HAP-1 (cell line): ENCODE measurements at regions of chr2 and their contacts with region 1.

Region 1: GRCh38 chr2:43484323-43484930 is 111.4 kb downstream of the THADA start:
- DNase-seq: peak in 1 of 2 experiments; percentile 77
- H3K4me3 ChIP-seq: no peak overlapping the region
- H3K4me1 ChIP-seq: peaks cover 3% of the 10 kb centered on the region
- H3K27me3 ChIP-seq: no peaks in the 10 kb centered on the region

Region 2: DNA sequence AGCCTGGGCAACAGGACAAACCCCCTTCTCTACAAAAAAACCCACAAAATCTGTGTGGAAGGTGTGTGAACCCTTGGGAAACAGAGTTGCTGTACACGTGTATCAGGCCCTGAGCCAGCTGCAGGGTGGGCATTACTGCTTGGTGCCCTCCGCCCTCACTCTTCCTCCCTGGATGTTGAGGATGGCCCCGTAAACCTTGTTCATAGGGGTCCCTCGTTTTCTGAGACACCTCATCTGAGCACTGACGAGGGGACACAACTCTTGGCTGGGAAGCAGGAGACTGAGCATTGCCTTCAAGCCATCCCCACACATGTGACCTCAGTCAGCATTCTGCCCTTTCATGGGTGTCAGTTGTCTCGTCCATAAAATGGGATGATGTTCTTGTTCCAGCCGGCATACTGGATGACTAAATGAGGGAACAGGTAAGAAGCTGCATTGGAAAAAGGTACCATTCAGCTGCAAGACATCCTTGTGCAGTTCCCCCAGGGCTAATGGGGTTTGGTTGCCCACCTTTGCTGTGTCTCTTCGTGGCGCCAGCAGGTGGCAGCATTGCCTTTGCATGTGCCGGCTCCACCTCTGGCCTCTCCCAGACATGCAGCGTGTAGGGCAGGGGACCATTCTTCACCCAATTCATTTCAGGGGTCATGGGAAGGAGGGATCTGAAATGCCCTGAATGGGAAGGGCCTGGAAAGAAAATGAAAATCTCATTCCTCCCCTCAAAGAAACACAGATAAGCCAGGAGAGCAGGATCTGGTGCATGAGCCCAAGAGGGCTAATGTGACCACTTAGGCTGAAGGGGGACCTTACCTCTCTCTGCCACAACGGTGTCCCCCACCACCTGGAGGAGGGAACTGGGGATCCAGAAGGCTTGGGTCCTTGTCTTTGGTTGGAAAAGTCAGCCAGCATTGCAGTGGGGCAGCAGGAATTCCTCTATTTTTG is 655.7 kb before region 1 on chr2:
- in situ Hi-C with region 1: loop called (anchors 5 kb)
- DNase-seq: peak; percentile 89 to 90
- H3K4me3 ChIP-seq: no peak overlapping the region
- H3K4me1 ChIP-seq: peaks cover 25% of the 10 kb centered on the region
- H3K27me3 ChIP-seq: no peaks in the 10 kb centered on the region

Region 3: DNA sequence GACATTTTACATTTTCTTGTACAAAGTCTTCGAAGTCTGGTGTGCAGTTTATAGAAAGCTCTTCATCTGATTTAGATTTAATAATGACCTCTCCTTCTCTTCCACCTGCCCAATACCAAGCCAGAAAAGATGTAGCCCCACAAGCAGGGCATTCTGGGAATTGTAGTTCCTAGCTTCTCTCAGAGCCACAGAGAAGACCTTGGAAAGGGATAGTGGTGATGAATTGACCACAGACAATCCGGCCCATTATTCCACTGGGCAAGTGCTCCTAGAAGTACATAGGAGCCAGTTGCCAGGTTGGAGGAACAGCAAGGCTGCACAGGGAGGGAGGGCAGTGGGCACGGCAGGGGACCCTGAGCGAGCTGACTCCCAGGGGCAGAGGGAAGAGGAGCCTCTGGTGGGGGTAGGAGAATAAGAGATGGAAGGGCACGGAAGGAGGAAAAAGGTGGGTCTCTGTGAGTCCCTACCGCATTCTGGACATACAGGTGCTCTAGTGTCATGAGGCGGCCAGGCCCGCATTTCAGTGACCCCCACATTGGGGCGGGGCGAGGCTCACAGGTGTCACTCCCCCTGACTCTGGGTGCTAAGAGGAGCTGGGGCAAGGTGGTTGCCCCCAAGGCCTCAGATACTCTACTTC is 539.5 kb before region 1 on chr2:
- in situ Hi-C with region 1: loop called (anchors 5 kb)
- DNase-seq: no peak
- H3K4me3 ChIP-seq: no peak overlapping the region
- H3K4me1 ChIP-seq: no peaks in the 10 kb centered on the region
- H3K27me3 ChIP-seq: no peaks in the 10 kb centered on the region

Region 4: GRCh38 chr2:43127208-43127940 is 357.1 kb before region 1 on chr2:
- in situ Hi-C with region 1: loop called (anchors 10 kb)
- DNase-seq: peak; percentile 39 to 87
- H3K4me3 ChIP-seq: no peak overlapping the region
- H3K4me1 ChIP-seq: no peaks in the 10 kb centered on the region
- H3K27me3 ChIP-seq: no peaks in the 10 kb centered on the region

Region 5: DNA sequence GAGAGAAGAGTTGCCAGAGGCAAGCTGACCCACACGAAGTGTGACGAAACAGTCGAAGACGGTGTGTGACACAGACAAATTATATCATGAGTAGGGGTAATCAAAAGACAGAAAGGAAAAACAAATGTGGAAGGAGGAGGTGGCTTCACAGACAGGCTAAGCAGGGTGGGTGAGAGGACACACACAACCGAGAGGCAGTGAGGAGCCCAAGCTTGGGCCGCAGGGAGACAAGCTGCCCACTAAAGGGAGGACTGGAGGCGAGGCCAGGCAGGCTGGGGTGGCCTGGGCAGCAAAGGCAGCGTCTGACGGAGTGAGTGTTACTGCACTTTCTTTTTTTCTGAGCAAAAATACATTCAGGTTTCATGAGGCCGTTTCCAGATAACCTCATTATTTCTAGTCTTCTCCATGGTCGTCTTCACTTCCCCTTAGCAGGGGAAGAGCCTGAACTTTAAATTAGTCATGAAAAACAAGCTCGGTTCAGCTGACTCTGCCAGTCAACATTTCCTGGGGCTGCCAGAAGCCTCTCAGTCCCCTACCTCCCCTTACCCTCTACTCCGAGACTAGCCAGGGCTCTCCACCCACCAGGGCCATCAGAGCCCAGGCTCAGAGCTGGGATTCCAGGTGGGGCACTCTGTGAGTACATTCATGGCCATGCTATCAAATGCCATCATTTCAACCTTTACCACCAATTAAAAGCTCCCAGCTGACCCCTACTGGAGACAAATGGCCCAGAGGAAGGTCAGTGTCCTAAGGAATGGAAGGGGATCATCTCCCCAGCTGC is 244.3 kb before region 1 on chr2:
- in situ Hi-C with region 1: loop called (anchors 10 kb)
- DNase-seq: no peak
- H3K4me3 ChIP-seq: no peak overlapping the region
- H3K4me1 ChIP-seq: no peaks in the 10 kb centered on the region
- H3K27me3 ChIP-seq: no peaks in the 10 kb centered on the region

Region 6: DNA sequence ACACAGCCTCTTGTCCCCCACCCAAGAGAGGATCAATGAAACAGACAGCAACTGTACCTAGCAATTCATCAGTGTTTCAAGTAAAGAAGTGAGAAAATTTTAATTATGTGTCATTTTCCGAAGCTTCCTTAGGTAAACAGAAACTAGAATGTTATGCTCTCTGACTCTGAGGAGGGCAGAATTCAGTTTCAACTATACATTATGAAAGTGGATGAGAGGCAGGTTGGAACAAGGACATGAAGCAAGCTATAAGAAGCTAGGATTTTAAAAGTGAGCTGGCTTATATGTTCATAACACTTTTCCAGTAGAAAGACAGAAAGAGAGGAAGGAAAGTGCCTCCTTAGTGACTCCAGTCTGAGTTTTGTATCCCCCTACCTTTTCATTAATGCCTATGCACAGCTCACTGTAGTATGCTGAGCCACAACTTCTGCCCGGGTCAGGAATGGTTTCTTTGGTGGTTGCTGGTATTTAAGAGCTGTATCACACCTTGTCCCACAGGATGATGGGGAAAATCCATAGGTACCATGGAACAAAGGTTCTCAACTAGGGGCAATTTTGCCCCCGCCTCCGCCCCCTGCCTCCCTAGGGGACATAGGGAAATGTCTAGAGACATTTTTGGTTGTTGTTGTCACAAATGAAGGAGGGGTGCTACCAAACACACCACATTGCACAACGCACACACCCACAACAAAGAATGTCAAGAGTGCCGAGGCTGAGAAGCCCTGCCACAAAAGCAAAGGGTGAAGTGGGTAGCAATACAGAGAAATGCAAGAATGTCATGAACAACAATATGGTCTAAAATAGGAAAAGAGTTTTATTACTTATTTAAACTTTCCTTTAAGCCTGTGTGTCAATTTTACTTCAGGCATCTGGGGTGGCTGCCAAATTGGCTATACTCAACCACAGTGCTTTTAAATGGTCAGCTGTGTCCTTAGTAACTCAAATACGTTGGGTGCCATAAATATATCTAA is 97.0 kb before region 1 on chr2:
- in situ Hi-C with region 1: no loop called
- DNase-seq: no peak
- H3K4me3 ChIP-seq: no peak overlapping the region
- H3K4me1 ChIP-seq: no peaks in the 10 kb centered on the region; the same call in 1 of the 2 replicates
- H3K27me3 ChIP-seq: no peaks in the 10 kb centered on the region